Common myeloid progenitor, CD34-positive (primary cell): ENCODE measurements at regions of chr4 and their contacts with region 1.

Region 1: GRCh38 chr4:1266881-1267763 is 18.2 kb upstream of the CTBP1 start:
- DNase-seq: no peak
- H3K4me3 ChIP-seq: no peak overlapping the region
- H3K27ac ChIP-seq: no peak overlapping the region
- H3K4me1 ChIP-seq: no peaks in the 10 kb centered on the region
- H3K27me3 ChIP-seq: no peaks in the 10 kb centered on the region

Region 2: DNA sequence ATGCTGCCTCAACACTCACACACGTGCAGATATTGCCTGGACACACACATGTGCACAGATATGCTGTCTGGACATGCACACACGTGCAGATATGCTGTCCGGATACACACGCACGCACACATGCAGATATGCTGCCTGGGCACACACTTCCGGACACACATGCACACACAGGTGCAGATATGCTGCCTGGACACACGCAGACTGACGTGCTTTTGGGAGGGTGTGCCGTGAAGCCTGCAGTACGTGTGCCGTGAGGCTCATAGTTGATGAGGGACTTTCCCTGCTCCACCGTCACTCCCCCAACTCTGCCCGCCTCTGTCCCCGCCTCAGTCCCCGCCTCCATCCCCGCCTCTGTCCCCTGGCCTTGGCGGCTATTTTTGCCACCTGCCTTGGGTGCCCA is 241.0 kb before region 1 on chr4:
- CTCF ChIA-PET with region 1: no interaction called
- POLR2A ChIA-PET with region 1: no interaction called
- DNase-seq: peak in 1 of 3 donors; percentile 49
- H3K4me3 ChIP-seq: no peak overlapping the region
- H3K27ac ChIP-seq: no peak overlapping the region
- H3K4me1 ChIP-seq: peaks cover 0 to 4% (median 0%) of the 10 kb centered on the region in 4 experiments
- H3K27me3 ChIP-seq: peaks cover 0 to 11% (median 0%) of the 10 kb centered on the region in 5 experiments

Region 3: GRCh38 chr4:1082215-1083182 is 184.6 kb before region 1 on chr4:
- CTCF ChIA-PET with region 1: no interaction called
- POLR2A ChIA-PET with region 1: no interaction called
- DNase-seq: peak; percentile 55 to 84 (median 83)
- H3K4me3 ChIP-seq: no peak overlapping the region
- H3K27ac ChIP-seq: no peak overlapping the region
- H3K4me1 ChIP-seq: peaks cover 0 to 6% (median 3%) of the 10 kb centered on the region in 4 experiments
- H3K27me3 ChIP-seq: peaks cover 0 to 14% (median 4%) of the 10 kb centered on the region in 5 experiments

Region 4: GRCh38 chr4:1130316-1131186 is 136.6 kb before region 1 on chr4:
- CTCF ChIA-PET with region 1: interaction called, 17 read pairs
- POLR2A ChIA-PET with region 1: no interaction called
- DNase-seq: peak; percentile 71 to 88 (median 81)
- H3K4me3 ChIP-seq: no peak overlapping the region
- H3K27ac ChIP-seq: no peak overlapping the region
- H3K4me1 ChIP-seq: peaks cover 0 to 4% (median 0%) of the 10 kb centered on the region in 4 experiments
- H3K27me3 ChIP-seq: peaks cover 0 to 5% (median 0%) of the 10 kb centered on the region in 5 experiments

Region 5: GRCh38 chr4:1277667-1278335 is 10.7 kb after region 1 on chr4:
- CTCF ChIA-PET with region 1: interaction called, 10 read pairs
- POLR2A ChIA-PET with region 1: no interaction called
- DNase-seq: peak in 2 of 3 donors; percentile 43
- H3K4me3 ChIP-seq: no peak overlapping the region
- H3K27ac ChIP-seq: no peak overlapping the region
- H3K4me1 ChIP-seq: no peaks in the 10 kb centered on the region
- H3K27me3 ChIP-seq: no peaks in the 10 kb centered on the region